Testis (tissue), 5 donors: ENCODE measurements at regions of chr1 and their contacts with region 1.

Region 1: DNA sequence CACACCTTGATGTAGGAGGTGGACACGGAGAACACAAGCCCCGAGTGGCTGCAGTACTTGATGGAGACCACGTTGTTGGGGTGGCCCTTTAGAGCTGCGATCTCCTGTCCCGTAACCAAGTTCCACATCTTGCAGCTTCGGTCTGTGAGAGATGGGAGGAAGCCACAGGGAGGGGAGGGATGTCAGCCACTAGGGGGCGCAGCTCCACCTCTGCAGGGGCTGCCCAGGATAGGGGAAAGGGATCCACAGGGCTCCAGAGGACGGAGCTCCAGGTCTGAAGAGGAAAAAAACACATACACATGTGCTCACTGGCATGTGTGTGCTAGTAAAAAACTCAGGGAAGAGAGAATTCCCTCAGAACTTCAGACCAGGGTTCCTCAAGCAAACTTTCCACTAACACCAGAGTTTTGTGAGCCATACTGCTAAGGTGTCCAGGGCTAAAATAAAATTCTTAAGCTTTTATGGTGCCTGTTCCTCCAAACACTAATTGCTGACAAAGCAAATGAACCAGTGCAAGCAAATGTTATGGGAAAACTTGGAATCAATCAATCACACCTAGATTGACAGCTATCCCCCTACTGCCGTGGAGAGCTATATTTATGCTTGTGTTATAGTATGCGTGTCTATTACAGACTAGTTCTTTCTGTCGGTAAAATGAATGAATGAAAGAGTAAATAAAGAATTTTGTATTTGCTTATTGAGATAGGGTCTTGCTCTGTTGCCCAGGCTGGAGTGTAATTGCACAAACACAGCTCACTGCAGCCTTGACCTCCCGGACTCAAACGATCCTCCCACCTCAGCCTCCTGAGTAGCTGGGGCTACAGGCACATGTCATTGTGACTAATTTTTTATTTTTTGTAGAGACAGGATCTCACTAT is 43.7 kb downstream of the KIF21B start:
- DNase-seq: peak; percentile 62
- H3K4me3 ChIP-seq: no peak overlapping the region
- H3K27ac ChIP-seq: no peak overlapping the region
- H3K4me1 ChIP-seq: no peaks in the 10 kb centered on the region
- H3K27me3 ChIP-seq: no peaks in the 10 kb centered on the region
- CTCF ChIP-seq: peak in 1 of 3 experiments; percentile 55
- POLR2A ChIP-seq: no peak

Region 2: DNA sequence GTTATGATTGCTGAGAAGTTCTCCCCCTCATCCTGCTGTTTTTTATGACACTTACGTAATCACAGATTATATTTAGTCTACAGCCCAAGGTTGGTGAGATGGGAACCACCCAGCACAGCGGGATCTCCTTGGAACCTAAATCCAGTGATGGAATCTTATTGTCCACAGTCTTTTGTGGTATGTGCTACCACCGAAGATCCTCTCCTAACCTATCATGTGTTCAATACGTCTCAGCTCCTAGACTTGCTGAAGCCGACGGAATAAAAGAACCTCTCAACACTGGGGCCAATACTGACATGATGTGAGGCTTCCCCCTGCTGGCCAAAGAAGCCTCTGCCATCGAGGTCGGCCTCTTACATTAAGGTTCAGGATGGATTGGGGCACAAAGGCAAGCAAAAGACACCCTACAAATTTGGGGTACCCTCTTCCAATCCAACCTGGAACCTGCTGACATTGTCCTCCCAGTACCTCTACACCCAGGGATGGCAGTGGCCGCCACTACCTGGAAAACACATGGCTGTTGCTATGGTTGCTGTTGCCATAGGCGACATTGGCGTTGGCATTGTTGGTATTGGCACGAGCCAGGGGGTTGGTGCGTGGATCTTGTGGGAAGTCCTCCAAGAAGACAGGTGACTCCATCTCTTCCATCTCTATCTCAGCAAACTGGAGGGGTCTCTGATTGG is 63.1 kb after region 1 on chr1:
- intact Hi-C with region 1: loop called (anchors 5 kb)
- DNase-seq: peak; percentile 79
- H3K4me3 ChIP-seq: no peak overlapping the region
- H3K27ac ChIP-seq: no peak overlapping the region
- H3K4me1 ChIP-seq: peaks cover 4% of the 10 kb centered on the region
- H3K27me3 ChIP-seq: no peaks in the 10 kb centered on the region
- CTCF ChIP-seq: peak; percentile 70 to 85 (median 84)
- POLR2A ChIP-seq: no peak